ENCODE measurements at regions of chr18 and their contacts with region 1.

Region 1: DNA sequence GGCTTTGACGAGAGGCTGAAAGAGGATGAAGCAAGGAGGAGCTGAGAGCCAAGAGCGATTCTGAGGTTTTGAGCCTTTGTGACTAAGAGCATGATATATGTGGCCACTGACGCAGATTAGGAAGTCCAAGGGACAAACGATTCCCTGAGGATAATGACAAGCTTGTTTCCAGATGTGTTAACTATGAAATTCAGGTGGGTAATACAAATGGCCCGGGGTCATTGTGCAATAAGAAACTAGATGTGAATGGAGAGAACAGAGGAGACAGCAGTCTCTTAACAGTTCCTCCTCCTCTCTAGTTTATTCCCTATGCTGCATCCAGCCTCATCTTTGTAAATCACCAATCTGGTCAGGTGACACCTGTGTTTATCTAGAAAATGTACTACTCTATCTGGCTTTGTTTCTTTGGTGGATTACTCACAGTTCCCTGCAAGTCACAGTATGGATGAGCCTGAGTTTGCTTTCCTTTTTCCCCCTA is 84.2 kb downstream of the SOCS6 start:
- DNase-seq: peak in 1 of 42 donors; percentile 33

Region 2: GRCh38 chr18:70421471-70422390 is 48.6 kb after region 1 on chr18:
- intact Hi-C with region 1: loop called (anchors 10 kb)
- DNase-seq: peak in 21 of 42 donors; percentile 17 to 75 (median 37)

Region 3: GRCh38 chr18:70535041-70535440 is 162.0 kb after region 1 on chr18:
- intact Hi-C with region 1: no loop called
- DNase-seq: no peak

Measured in head of caudate nucleus (tissue), 42 donors.